ENCODE measurements at regions of chrX and their contacts with region 1.

Region 1: DNA sequence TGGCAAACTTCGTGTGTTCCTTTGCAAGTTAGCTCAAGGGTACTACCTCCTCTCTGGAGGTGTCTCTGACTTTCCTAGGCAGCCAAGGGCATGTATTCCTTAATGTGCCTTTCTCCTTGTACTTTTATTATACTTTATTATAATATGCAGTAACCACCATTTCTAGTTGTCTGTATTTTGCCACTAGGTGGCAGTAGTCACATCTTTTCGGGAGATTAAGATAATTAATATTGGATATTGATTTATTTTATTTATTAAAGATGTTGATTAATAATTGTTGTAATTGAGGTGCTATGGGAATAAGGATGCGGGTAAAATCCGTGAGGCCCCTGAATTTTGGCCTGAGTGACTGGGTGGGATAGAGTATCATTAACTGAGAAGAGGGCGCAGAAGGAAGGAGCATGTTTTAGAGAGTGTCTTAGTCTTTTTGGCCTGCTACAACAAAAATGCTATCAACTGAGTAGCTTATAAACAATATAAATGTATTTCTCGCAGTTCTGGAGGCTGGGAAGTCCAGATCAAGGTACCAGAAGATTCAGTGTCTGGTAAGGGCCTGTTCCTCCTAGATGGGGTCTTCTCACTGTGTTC is 153.3 kb downstream of the TMEM164 start:
- DNase-seq: no peak
- ATAC-seq: no peak

Region 2: GRCh38 chrX:109911046-109911445 is 245.2 kb before region 1 on chrX:
- intact Hi-C with region 1: no loop called
- DNase-seq: no peak
- ATAC-seq: no peak

Region 3: GRCh38 chrX:110407910-110408545 is 251.8 kb after region 1 on chrX:
- intact Hi-C with region 1: loop called (anchors 1 to 5 kb)
- DNase-seq: no peak
- ATAC-seq: peak; percentile 61 to 67

Region 4: DNA sequence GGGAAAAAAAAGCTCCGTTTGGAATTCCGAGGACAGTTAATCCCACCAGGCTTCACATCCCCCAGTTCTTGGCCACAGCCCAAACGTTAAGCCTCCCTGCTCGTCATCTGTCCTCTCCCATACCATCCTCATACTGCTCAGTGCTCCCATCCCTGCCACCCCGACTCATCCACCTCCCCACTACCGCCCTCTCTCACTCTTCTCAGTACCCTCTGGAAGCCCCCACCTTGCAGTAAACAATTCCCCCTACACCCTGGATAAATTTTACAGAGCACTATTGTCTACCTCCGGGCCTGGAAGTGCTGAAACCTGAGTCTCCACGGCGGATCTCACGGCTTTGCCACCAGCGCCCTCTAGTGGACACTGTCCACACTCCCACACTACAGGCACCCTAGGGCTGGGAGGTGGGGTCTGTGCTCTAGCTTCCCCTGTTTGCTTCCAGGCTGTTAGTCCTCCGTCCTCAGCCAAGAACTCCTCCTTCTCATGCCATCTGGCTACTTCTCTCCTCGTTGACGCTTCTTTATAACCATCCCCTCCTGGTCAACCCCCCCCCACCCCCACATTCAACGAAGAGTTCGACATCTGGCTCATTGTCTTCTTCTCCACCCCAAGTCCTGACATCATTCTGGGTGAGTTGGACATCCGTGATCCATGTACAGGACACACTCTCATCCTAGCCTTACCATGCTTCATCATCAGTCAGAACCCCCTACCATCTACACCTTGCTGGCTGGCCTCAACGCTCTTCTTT is 256.9 kb after region 1 on chrX:
- intact Hi-C with region 1: loop called (anchors 1 to 5 kb)
- DNase-seq: peak; percentile 73
- ATAC-seq: peak; percentile 90 to 91

Measured in left cardiac atrium (tissue), 4 donors.